ENCODE measurements at regions of chr12 and their contacts with region 1.

Region 1: GRCh38 chr12:8544295-8544694 is 3.6 kb upstream of the CLEC4E start:
- DNase-seq: peak; percentile 4
- H3K4me3 ChIP-seq: no peak overlapping the region
- CTCF ChIP-seq: peak; percentile 77

Region 2: DNA sequence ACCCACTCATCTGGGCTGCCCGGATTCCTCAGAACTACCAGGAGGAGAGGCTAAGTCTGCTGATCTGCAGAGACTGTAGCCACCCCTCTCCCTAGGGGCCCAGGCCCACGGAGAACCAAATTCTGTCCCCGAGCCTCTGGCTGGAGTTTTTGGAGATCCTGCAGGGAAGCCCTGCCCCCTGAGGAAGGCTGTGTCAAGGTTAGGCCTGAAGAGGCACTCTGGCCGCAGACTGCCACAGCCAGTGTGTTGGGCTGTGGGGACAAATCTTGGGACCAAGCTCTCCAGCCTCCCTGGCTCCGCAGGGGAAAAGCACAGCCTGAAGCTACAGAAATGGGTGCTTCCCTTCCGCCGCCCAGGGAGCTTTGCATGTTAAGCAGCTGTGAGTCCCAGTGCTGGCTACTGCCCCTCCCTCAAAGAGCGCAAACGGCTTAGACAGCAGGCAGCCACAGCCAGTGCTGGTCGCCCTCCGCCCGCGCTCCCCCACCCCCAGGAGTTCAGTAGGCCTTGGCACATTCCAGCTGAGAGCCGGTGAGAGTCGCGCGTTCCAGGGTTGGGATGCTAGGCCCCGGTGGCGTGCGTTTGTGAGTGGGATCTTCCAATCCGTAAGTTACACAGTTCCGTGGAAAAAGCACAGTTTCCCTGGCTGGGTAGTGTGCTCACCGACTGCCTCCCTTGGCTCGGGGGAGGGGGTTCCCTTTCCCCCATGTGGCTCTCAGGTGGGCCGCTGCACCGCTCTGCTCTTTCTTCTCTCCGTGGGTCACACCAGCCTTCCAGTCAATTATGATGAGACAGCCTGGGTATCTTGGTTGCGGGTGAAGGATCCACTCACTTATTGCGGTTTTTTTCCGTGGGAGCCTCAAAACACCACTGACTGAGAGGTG is 16.8 kb before region 1 on chr12:
- CTCF ChIA-PET with region 1: interaction called, 19 read pairs
- POLR2A ChIA-PET with region 1: no interaction called
- DNase-seq: no peak
- H3K4me3 ChIP-seq: no peak overlapping the region
- CTCF ChIP-seq: no peak

Region 3: DNA sequence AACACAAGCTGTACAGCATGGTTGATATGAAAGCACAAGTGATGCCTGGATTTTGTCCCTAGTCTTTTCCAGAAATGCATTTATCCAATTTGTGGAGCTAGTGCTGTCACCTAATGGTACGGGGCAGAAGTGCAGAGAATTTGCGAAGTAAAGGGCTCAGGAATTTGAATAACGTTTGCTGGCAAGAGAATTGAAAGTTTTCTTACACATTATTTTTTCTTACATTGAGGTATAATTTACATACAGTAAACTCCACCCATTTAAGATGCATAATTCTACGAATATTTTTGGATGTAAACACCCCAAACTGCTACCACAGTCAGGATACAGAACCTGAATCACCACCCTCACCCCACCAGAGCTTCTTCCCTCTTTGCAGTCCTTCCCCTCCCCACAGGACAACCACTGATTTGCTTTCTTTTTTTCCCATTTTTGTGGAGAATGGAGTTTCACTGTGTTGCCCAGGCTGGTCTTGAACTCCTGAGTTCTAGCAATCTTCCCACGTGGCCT is 64.8 kb after region 1 on chr12:
- CTCF ChIA-PET with region 1: interaction called, 36 read pairs
- POLR2A ChIA-PET with region 1: no interaction called
- DNase-seq: peak; percentile 10
- H3K4me3 ChIP-seq: no peak overlapping the region
- CTCF ChIP-seq: peak; percentile 57

Region 4: DNA sequence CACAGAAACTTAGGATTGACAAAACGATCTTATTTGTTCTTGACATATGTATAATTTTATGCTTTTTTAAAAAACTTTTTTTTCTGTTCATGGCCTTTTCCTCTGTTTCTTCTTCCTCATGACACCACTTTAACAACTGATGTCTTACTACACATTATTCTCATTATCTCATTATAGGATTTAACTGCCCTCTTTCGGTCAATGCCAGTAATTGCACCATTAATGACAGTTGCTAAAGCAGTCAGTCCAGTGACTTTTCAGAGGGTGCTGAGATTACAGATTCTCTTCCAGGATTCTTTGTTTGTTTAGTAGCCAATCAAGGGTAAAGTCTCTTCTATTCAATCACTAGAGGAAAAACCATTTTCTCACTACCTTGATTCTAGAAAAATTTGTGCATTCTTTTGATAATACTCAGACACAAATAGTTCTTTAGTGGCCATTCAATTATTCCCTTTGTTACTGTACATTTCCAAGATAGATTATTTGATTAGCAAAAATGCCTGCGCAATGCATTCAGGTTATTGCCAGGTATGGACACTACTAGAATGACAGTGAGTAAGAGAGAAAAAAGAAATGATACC is 495.2 kb after region 1 on chr12:
- CTCF ChIA-PET with region 1: interaction called, 18 read pairs
- POLR2A ChIA-PET with region 1: no interaction called
- DNase-seq: no peak
- H3K4me3 ChIP-seq: no peak overlapping the region
- CTCF ChIP-seq: peak; percentile 60

Region 5: GRCh38 chr12:9049520-9050133 is 505.3 kb after region 1 on chr12:
- CTCF ChIA-PET with region 1: interaction called, 60 read pairs
- POLR2A ChIA-PET with region 1: no interaction called
- DNase-seq: no peak
- H3K4me3 ChIP-seq: no peak overlapping the region
- CTCF ChIP-seq: no peak

Measured in AG04449 (cell line).